WTC11 (cell line): ENCODE measurements at regions of chr7 and their contacts with region 1.

Region 1: DNA sequence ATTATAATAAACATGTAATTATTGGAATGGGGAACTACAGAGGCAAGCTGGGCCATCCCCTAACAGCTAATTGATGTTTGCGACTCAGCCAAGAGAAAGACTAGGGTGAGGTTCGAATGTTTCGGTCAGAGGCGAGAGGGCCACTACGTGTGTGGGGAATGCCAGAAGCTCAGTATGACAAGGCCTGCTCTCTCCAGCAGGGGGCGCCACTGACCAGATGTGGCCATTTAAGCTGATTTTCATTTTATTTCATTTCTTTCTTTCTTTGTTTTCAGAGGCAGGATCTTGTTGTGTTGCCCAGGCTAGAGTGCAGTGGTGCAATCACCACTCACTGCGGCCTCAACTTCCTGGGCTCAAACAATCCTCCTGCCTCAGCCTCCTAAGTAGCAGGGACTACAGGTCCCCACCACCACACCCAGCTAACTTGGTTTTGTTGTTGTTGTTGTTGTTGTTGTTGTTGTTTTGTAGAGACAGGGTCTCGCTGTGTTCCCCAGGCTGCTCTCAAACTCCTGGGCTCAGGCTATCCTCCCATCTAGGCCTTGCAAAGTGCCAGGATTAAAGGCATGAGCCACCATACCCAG is 38.1 kb downstream of the TMEM130 start:
- DNase-seq: peak; percentile 70
- ATAC-seq: peak; percentile 49
- H3K4me3 Mint-ChIP-seq: no peak overlapping the region
- H3K27ac Mint-ChIP-seq: no peak overlapping the region
- H3K4me1 Mint-ChIP-seq: peaks cover 10% of the 10 kb centered on the region
- H3K27me3 Mint-ChIP-seq: no peaks in the 10 kb centered on the region; the same call in 1 of the 2 replicates
- CTCF ChIP-seq: peak; percentile 81

Region 2: DNA sequence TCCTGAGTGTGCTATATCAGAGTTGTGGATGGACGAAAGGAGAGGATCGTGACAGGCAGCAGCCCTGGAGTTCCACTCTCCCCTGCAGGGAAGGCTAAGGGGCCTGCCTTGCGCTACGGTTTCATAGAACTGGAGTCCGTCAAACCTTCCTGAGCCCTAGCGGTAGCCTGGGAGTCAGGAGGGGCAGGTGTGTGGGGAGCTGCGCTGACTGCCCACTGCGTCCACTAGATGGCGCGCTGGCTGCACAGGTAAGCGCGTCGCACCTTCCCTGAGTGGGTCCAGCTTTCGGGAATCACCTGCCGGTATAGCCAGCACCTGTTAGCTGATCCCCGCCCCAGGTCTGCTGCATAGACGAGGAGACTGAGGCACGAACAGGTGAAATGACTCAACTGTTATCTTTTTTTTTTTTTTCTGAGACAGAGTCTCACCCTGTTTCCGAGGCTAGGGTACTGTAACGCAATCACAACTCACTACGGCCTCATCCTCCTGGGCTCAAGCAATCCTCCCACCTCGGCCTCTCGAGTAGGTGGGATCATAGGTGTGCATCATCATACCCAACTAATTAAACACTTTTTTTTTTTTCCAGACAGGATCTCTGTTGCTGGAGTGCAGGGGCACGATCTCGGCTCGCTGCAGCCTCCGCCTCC is 410.6 kb before region 1 on chr7:
- CTCF ChIA-PET with region 1: interaction called, 12 read pairs
- POLR2A ChIA-PET with region 1: no interaction called
- DNase-seq: peak; percentile 93
- ATAC-seq: peak; percentile 99
- H3K4me3 Mint-ChIP-seq: no peak overlapping the region
- H3K27ac Mint-ChIP-seq: no peak overlapping the region
- H3K4me1 Mint-ChIP-seq: no peaks in the 10 kb centered on the region
- H3K27me3 Mint-ChIP-seq: peaks cover 13% of the 10 kb centered on the region
- CTCF ChIP-seq: peak; percentile 92

Region 3: DNA sequence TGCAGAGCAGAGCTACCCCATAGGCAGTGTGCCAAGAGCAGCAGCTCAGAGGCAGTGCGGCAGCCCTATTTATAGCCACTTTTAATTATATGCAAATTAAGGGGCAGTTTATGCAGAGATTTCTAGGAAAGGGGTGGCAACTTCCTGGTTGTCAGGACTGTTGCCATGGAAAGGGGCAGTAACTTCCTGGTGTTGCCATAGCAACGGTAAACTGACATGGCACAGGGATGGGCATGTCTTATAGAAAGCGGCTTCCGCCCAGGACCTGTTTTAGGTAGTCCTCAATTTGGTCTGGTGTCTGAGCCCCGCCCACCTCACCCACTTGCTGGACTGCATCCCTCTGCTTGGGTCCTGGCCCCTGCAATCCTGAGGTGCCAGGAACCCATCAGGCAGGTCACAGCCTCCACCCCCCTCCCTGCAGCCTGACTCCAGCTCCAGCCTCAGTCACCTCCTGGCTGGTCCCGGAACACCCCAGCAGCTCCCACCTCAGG is 77.7 kb before region 1 on chr7:
- CTCF ChIA-PET with region 1: interaction called, 25 read pairs
- POLR2A ChIA-PET with region 1: no interaction called
- DNase-seq: peak; percentile 36
- ATAC-seq: peak; percentile 83
- H3K4me3 Mint-ChIP-seq: no peak overlapping the region
- H3K27ac Mint-ChIP-seq: no peak overlapping the region
- H3K4me1 Mint-ChIP-seq: peaks cover 3% of the 10 kb centered on the region; the same call in 1 of the 2 replicates
- H3K27me3 Mint-ChIP-seq: no peaks in the 10 kb centered on the region
- CTCF ChIP-seq: no peak

Region 4: DNA sequence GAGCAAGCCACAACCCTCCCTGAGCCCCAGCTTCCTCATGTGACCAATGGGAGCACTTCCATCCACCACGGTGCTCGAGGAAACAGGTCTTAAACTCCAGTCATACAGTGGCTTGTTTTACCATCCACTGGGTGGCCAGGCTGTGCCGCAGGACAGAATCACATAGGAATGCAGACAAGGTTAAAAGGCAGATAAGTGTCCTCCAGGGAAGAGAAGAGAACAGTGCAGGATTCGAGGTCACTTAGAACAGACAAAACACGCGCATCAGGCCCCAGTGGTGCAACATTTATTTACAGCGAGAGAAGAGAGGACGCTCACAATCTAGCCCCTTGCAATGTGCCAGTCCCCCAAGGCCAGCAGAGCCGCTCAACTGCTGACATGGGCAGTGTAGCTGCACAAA is 54.7 kb before region 1 on chr7:
- CTCF ChIA-PET with region 1: interaction called, 35 read pairs
- POLR2A ChIA-PET with region 1: interaction called, 3 read pairs
- DNase-seq: no peak
- ATAC-seq: no peak
- H3K4me3 Mint-ChIP-seq: no peak overlapping the region
- H3K27ac Mint-ChIP-seq: no peak overlapping the region
- H3K4me1 Mint-ChIP-seq: peaks cover 20% of the 10 kb centered on the region
- H3K27me3 Mint-ChIP-seq: peaks cover 7% of the 10 kb centered on the region
- CTCF ChIP-seq: no peak

Region 5: DNA sequence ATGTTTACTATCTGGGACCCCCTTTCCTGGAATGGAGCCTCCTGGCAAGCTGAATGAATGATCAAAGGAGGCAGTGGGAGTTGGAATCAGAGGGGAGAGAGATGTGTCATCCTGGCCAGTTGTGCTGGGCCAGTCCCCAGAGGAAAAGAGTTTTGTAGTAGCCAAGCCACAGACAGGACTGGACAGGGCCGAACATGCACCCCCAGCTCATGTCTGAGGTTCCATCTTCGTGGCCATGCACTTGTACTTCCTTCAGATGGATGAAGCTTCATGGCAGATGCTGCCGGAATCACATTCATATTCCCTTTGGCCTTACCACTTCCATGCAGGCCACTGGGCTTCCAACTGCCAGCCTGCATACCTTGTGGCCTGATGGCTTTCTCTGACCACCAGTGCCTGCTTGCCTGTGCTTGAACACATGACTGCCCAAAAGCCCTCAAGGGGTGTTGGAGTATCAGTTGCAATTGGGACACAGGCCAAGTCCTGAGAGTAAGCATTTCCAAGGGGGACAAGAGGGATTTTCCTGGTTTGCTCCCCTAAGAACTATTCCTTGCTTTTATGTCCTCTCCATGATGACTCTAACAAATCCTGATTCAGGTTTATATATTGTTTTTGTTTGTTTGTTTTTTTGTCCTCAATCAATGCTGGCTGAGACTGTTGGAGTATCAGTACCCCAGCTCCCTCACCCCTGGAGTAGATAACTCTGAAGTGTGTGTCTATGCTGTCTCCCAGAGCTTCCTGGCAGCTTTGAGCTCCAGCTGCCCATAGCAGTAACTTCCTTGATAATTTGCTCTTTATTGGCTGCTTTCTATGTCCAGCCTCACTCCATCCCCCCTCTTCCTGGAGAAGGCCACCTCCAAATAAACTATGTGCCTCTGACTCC is 25.5 kb before region 1 on chr7:
- CTCF ChIA-PET with region 1: interaction called, 13 read pairs
- POLR2A ChIA-PET with region 1: no interaction called
- DNase-seq: no peak
- ATAC-seq: no peak
- H3K4me3 Mint-ChIP-seq: no peak overlapping the region
- H3K27ac Mint-ChIP-seq: no peak overlapping the region
- H3K4me1 Mint-ChIP-seq: no peaks in the 10 kb centered on the region
- H3K27me3 Mint-ChIP-seq: no peaks in the 10 kb centered on the region; the same call in 1 of the 2 replicates
- CTCF ChIP-seq: no peak

Region 6: GRCh38 chr7:98870121-98870651 is 38.5 kb after region 1 on chr7:
- CTCF ChIA-PET with region 1: interaction called, 16 read pairs
- POLR2A ChIA-PET with region 1: no interaction called
- DNase-seq: peak; percentile 77
- ATAC-seq: peak; percentile 77
- H3K4me3 Mint-ChIP-seq: peak overlapping the region; percentile 77
- H3K27ac Mint-ChIP-seq: no peak overlapping the region
- H3K4me1 Mint-ChIP-seq: 0 out of 2 replicates have a peak, but pooled peaks cover 3% of the 10 kb centered on the region
- H3K27me3 Mint-ChIP-seq: peaks cover 52% of the 10 kb centered on the region
- CTCF ChIP-seq: no peak

Region 7: GRCh38 chr7:98956937-98957336 is 125.2 kb after region 1 on chr7:
- CTCF ChIA-PET with region 1: no interaction called
- POLR2A ChIA-PET with region 1: no interaction called
- DNase-seq: no peak
- ATAC-seq: no peak
- H3K4me3 Mint-ChIP-seq: no peak overlapping the region
- H3K27ac Mint-ChIP-seq: no peak overlapping the region
- H3K4me1 Mint-ChIP-seq: no peaks in the 10 kb centered on the region
- H3K27me3 Mint-ChIP-seq: no peaks in the 10 kb centered on the region
- CTCF ChIP-seq: no peak

Region 8: GRCh38 chr7:99143853-99144672 is 312.3 kb after region 1 on chr7 and contains the start of gene SMURF1:
- CTCF ChIA-PET with region 1: no interaction called
- POLR2A ChIA-PET with region 1: no interaction called
- DNase-seq: peak; percentile 51
- ATAC-seq: peak; percentile 11
- H3K4me3 Mint-ChIP-seq: peak within 1 kb of the TSS; percentile 91
- H3K27ac Mint-ChIP-seq: peak within 1 kb of the TSS; percentile 96
- H3K4me1 Mint-ChIP-seq: peaks cover 33% of the 10 kb centered on the region
- H3K27me3 Mint-ChIP-seq: no peaks in the 10 kb centered on the region; the same call in 1 of the 2 replicates
- CTCF ChIP-seq: no peak
- total RNA-seq, gene SMURF1: 22.1 to 23.2 TPM (median 22.4 TPM) in 3 replicates